ENCODE measurements at regions of chr6 and their contacts with region 1.

Region 1: GRCh38 chr6:15184441-15184861 is 61.4 kb upstream of the JARID2 start:
- DNase-seq: no peak
- H3K4me3 Mint-ChIP-seq: no peak overlapping the region
- H3K27ac Mint-ChIP-seq: no peak overlapping the region
- H3K4me1 Mint-ChIP-seq: no peaks in the 10 kb centered on the region
- H3K27me3 Mint-ChIP-seq: no peaks in the 10 kb centered on the region
- CTCF ChIP-seq: no peak

Region 2: GRCh38 chr6:15090145-15090579 is 94.3 kb before region 1 on chr6:
- CTCF ChIA-PET with region 1: no interaction called
- intact Hi-C with region 1: no loop called
- DNase-seq: no peak
- H3K4me3 Mint-ChIP-seq: no peak overlapping the region
- H3K27ac Mint-ChIP-seq: no peak overlapping the region
- H3K4me1 Mint-ChIP-seq: no peaks in the 10 kb centered on the region
- H3K27me3 Mint-ChIP-seq: no peaks in the 10 kb centered on the region
- CTCF ChIP-seq: no peak

Region 3: DNA sequence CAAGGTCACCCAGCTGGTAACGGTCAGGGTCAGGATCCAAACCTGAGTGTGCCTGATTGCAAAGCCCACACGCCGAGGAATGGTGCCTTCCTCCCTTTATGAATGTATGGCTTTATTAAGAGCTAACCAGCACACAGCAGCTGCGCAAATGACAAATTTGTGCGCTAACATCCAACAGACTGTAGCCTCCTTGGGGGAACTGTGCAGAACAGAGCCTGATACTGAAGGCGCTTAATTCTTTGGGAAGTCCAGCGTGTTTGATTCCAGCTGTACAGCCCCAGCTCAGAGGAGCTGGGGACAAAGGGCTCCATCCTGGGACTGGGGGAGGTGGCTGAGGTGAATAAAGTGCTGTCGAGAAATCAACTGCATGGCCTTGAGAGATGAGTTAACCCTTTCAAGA is 14.3 kb before region 1 on chr6:
- CTCF ChIA-PET with region 1: interaction called, 11 read pairs
- intact Hi-C with region 1: no loop called
- DNase-seq: no peak
- H3K4me3 Mint-ChIP-seq: no peak overlapping the region
- H3K27ac Mint-ChIP-seq: no peak overlapping the region
- H3K4me1 Mint-ChIP-seq: no peaks in the 10 kb centered on the region
- H3K27me3 Mint-ChIP-seq: no peaks in the 10 kb centered on the region
- CTCF ChIP-seq: no peak